Left colon (tissue), 2 donors: ENCODE measurements at regions of chr7 and their contacts with region 1.

Region 1: GRCh38 chr7:93055543-93056107 is 62.2 kb downstream of the SAMD9 start:
- DNase-seq: no peak
- ATAC-seq: peak; percentile 39

Region 2: DNA sequence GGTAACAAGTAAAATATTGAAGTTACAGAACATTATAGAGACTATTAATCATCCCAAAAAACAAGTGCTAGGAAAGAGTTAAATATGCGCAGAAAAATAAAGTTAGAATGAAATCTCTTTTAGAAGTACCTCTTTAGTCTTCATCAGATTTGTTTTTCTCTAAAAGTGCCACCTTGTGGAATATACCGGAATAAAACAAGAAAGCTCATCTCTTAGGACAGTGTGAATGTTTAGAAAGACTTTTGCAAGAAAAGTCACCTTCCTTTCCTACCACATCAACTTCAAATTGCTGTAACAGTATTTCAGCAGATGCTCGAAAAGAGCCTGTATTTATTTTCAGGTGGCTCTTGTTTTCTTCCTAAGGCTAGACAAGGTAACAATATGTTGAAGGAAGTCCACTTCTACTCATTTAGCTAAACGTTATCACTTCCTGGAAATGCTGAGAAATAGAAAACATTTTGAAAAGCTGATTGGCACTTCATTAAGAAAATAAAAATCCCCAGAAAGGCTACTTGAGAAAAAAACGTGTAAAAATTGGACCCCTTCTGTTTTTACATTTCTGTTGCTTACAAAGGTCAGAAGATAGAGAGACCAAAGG is 445.6 kb before region 1 on chr7:
- intact Hi-C with region 1: loop called (anchors 10 kb)
- DNase-seq: no peak
- ATAC-seq: peak; percentile 37